ENCODE measurements at regions of chr15 and their contacts with region 1.

Region 1: GRCh38 chr15:87597346-87598052 is 659.0 kb downstream of the NTRK3 start:
- DNase-seq: no peak
- ATAC-seq: peak; percentile 65
- H3K4me3 ChIP-seq: no peak overlapping the region
- H3K27ac ChIP-seq: no peak overlapping the region
- H3K4me1 ChIP-seq: no peaks in the 10 kb centered on the region
- H3K27me3 ChIP-seq: no peaks in the 10 kb centered on the region
- CTCF ChIP-seq: no peak
- POLR2A ChIP-seq: no peak
- RAD21 ChIP-seq: no peak

Region 2: GRCh38 chr15:87348746-87349145 is 248.8 kb before region 1 on chr15:
- CTCF ChIA-PET with region 1: no interaction called
- POLR2A ChIA-PET with region 1: no interaction called
- dilution Hi-C with region 1: no loop called
- in situ Hi-C with region 1: no loop called
- intact Hi-C with region 1: loop called (anchors 10 kb)
- DNase-seq: peak; percentile 76
- ATAC-seq: peak; percentile 76
- H3K4me3 ChIP-seq: no peak overlapping the region
- H3K27ac ChIP-seq: no peak overlapping the region
- H3K4me1 ChIP-seq: peaks cover 4% of the 10 kb centered on the region; the same call in 1 of the 2 replicates
- H3K27me3 ChIP-seq: no peaks in the 10 kb centered on the region; the same call in 1 of the 2 replicates
- CTCF ChIP-seq: no peak
- POLR2A ChIP-seq: no peak
- RAD21 ChIP-seq: no peak

Region 3: GRCh38 chr15:87576486-87577208 is 20.9 kb before region 1 on chr15:
- CTCF ChIA-PET with region 1: no interaction called
- POLR2A ChIA-PET with region 1: no interaction called
- dilution Hi-C with region 1: no loop called
- in situ Hi-C with region 1: no loop called
- intact Hi-C with region 1: no loop called
- DNase-seq: no peak
- ATAC-seq: no peak
- H3K4me3 ChIP-seq: no peak overlapping the region
- H3K27ac ChIP-seq: no peak overlapping the region
- H3K4me1 ChIP-seq: no peaks in the 10 kb centered on the region
- H3K27me3 ChIP-seq: no peaks in the 10 kb centered on the region
- CTCF ChIP-seq: no peak
- POLR2A ChIP-seq: no peak
- RAD21 ChIP-seq: no peak

Region 4: DNA sequence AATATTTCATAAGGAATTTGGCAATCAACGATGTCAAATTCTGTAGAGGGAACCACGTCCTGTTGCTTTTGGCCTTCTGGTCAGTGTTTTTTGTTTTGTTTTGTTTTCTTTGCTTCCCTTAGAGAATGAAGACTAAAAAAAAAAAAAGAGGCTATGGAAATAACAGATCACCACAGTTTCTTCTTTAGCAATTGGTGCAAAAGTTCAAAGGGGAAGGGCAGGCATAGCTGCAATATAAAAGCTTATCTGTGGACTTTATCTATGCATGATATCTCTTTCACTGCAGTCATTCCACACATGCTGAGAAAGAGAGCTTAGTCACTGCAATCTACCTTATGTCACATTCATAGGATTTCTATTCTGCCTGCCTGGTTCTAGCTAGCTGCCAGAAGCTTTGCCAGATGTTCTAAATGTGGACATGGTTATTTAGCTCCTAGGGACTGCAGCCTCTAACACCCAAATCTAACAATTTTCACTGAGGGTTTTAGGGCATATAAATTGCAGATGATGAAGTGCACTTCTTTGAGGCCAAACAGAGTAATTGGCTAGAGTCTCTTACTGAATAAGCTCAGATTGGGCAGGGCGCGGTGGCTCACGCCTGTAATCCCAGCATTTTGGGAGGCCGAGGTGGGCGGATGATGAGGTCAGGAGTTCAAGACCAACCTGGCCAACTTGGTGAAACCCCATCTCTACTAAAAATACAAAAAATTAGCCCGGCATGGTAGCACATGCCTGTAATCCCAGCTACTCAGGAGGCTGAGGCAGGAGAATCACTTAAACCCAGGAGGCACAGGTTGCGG is 21.9 kb after region 1 on chr15:
- CTCF ChIA-PET with region 1: interaction called, 12 read pairs
- POLR2A ChIA-PET with region 1: no interaction called
- dilution Hi-C with region 1: no loop called
- in situ Hi-C with region 1: no loop called
- intact Hi-C with region 1: no loop called
- DNase-seq: peak; percentile 44
- ATAC-seq: peak; percentile 68
- H3K4me3 ChIP-seq: no peak overlapping the region
- H3K27ac ChIP-seq: no peak overlapping the region
- H3K4me1 ChIP-seq: no peaks in the 10 kb centered on the region
- H3K27me3 ChIP-seq: no peaks in the 10 kb centered on the region
- CTCF ChIP-seq: no peak
- POLR2A ChIP-seq: no peak
- RAD21 ChIP-seq: no peak

Region 5: GRCh38 chr15:87703327-87704111 is 106.0 kb after region 1 on chr15:
- CTCF ChIA-PET with region 1: no interaction called
- POLR2A ChIA-PET with region 1: no interaction called
- dilution Hi-C with region 1: no loop called
- in situ Hi-C with region 1: no loop called
- intact Hi-C with region 1: no loop called
- DNase-seq: no peak
- ATAC-seq: no peak
- H3K4me3 ChIP-seq: no peak overlapping the region
- H3K27ac ChIP-seq: no peak overlapping the region
- H3K4me1 ChIP-seq: no peaks in the 10 kb centered on the region
- H3K27me3 ChIP-seq: no peaks in the 10 kb centered on the region; the same call in 1 of the 2 replicates
- CTCF ChIP-seq: no peak
- POLR2A ChIP-seq: no peak
- RAD21 ChIP-seq: no peak

Region 6: GRCh38 chr15:88238618-88239430 is 641.3 kb after region 1 on chr15:
- CTCF ChIA-PET with region 1: no interaction called
- POLR2A ChIA-PET with region 1: no interaction called
- dilution Hi-C with region 1: no loop called
- in situ Hi-C with region 1: no loop called
- intact Hi-C with region 1: loop called (anchors 1 kb)
- DNase-seq: peak; percentile 41
- ATAC-seq: peak; percentile 59
- H3K4me3 ChIP-seq: no peak overlapping the region
- H3K27ac ChIP-seq: no peak overlapping the region
- H3K4me1 ChIP-seq: no peaks in the 10 kb centered on the region
- H3K27me3 ChIP-seq: no peaks in the 10 kb centered on the region
- CTCF ChIP-seq: no peak
- POLR2A ChIP-seq: no peak
- RAD21 ChIP-seq: no peak

Measured in IMR-90 (cell line).